ENCODE measurements at regions of chr9 and their contacts with region 1.

Region 1: DNA sequence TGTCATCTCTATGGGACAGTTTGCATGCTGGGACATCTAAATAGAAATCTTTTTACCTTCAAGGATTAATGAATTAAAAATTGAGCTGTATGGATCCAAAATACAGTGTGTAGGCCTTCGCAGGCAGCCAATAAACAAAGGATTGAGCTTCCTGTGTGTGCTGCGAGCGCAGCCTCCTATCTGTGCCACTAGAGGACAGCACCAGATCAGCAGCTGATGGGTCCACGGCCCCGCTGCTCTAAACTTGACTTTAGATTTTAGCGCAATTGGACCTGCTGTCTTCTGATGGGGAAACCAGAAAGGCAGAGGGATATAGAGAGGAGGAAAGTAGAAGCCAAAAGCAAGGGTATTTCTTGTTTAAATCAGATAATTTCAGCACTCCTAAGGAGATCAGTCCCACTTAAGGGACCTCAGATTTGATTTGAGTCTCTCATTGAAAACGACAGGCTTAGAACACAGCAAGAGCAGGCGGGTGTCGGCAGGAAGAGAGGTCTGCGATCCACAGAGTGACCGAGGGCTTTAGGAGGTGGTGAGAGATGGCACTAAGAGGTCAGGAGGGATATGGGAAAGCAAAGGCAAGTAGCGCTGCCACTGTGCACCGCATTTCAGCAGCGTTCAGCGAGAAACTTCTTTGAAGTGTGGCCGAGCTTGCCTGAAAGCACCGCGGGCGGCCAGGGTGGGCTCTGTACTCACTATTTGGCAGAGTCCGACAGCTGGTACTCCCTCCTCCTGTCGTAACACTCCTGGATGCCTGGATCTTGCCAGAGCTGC is 214.3 kb downstream of the GNA14 start:
- DNase-seq: peak; percentile 73
- CTCF ChIP-seq: peak; percentile 92

Region 2: DNA sequence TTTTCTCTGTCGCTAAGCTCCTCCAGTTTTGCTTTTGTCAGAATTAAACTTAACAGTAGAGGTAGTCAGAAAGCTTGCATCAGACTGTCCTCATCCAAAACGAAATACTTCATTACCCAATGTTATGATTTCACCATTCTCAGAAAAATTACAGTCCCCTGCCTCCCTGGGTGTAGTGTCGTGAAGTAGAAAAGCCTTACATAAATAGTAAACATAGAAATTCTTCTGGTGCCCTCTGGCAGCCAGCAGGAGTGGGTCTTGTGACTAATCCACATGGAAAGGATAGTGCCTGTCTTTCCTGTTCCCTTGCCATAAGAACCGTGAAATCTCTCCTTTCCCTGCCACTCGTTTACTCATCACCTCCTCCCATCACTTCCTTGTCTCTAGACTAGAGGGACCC is 16.3 kb before region 1 on chr9:
- CTCF ChIA-PET with region 1: interaction called, 12 read pairs
- POLR2A ChIA-PET with region 1: no interaction called
- DNase-seq: no peak
- CTCF ChIP-seq: no peak

Region 3: DNA sequence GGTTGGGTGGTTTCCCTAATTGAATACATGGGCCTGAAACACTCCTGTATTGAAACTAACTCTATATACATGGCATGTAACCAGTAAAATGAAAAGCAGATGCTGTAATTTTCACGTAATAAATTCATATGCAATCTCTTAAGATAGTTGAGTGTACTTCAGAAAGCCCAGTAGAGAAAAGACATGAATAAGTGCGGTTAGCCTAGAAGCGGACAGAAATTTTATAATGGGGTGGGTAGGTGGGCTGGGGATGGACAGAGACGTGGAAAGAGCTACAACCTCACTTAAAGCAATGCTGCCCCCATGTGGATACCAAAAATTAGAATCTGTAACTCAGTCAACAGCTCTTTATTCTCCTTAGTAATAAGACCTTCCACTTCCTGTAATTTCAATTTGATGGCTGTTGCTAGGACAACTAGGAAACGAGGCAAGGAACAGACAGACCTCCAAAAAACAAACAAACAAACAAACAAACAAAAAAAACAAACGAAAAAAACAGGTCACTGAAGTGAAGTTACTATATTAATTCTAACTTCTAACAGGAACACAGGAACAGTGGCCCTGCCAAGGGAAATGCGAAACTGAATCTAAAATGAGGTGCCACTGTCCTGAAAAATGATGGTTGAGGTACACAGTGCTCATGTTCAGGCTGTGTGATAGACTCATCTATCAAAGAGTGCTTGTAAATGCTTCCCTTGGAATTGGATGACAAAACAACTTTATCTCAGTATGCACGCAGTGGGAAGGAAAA is 317.7 kb after region 1 on chr9:
- CTCF ChIA-PET with region 1: interaction called, 12 read pairs
- POLR2A ChIA-PET with region 1: no interaction called
- DNase-seq: peak; percentile 15
- CTCF ChIP-seq: peak; percentile 44

Region 4: GRCh38 chr9:77793904-77794303 is 360.0 kb after region 1 on chr9:
- CTCF ChIA-PET with region 1: no interaction called
- POLR2A ChIA-PET with region 1: no interaction called
- DNase-seq: no peak
- CTCF ChIP-seq: no peak